Endothelial cell of umbilical vein (primary cell): ENCODE measurements at regions of chr6 and their contacts with region 1.

Region 1: GRCh38 chr6:152338335-152339125 is 298.6 kb downstream of the SYNE1 start:
- DNase-seq: peak; percentile 68
- H3K4me3 ChIP-seq: no peak overlapping the region
- H3K27ac ChIP-seq: no peak overlapping the region
- H3K4me1 ChIP-seq: no peaks in the 10 kb centered on the region
- H3K27me3 ChIP-seq: no peaks in the 10 kb centered on the region
- CTCF ChIP-seq: peak; percentile 87 to 89
- POLR2A ChIP-seq: no peak

Region 2: DNA sequence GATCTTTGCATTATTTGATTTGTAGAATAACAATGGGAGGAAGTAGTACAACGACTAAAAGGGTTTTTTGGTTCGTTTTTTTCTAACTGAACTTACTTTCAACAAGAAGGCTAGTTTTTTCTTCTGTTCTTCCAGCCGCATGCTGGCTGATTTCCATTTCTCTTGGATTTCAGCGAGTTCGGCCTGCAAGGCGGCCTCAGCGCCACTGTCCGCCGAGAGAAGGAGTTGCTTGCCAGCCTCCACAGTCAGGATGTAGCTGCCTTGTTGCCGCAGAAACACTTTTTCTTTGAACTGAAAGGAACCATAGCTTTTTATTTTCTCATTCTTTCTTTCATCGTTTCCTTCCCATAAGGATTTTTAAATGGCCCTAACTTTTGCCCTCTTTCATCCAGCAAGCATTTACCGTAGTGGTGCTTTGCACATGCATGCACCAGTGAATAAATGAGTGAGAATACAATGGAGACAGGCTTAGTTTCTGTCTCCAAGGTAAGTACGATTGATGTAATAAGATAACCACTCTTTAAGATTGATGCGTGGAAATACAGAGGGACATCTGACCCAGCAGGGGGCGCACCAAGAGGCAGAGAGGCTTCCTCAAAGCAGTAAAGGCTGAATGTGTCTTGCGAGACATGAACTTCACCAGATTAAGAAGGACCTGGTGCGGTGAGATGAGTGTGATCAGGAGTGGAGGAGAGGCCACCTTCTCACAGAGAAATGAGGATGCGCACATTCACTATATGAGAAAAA is 132.3 kb before region 1 on chr6:
- CTCF ChIA-PET with region 1: no interaction called
- POLR2A ChIA-PET with region 1: no interaction called
- dilution Hi-C with region 1: no loop called
- intact Hi-C with region 1: loop called (anchors 10 kb)
- DNase-seq: peak; percentile 37
- H3K4me3 ChIP-seq: no peak overlapping the region
- H3K27ac ChIP-seq: no peak overlapping the region
- H3K4me1 ChIP-seq: no peaks in the 10 kb centered on the region
- H3K27me3 ChIP-seq: no peaks in the 10 kb centered on the region
- CTCF ChIP-seq: peak; percentile 17 to 48
- POLR2A ChIP-seq: no peak

Region 3: GRCh38 chr6:152295346-152295745 is 43.2 kb before region 1 on chr6:
- CTCF ChIA-PET with region 1: interaction called, 152 read pairs
- POLR2A ChIA-PET with region 1: interaction called, 5 read pairs
- dilution Hi-C with region 1: no loop called
- intact Hi-C with region 1: no loop called
- DNase-seq: no peak
- H3K4me3 ChIP-seq: no peak overlapping the region
- H3K27ac ChIP-seq: no peak overlapping the region
- H3K4me1 ChIP-seq: no peaks in the 10 kb centered on the region
- H3K27me3 ChIP-seq: no peaks in the 10 kb centered on the region
- CTCF ChIP-seq: no peak
- POLR2A ChIP-seq: no peak

Region 4: GRCh38 chr6:152323376-152323775 is 15.2 kb before region 1 on chr6:
- CTCF ChIA-PET with region 1: interaction called, 34 read pairs
- POLR2A ChIA-PET with region 1: no interaction called
- dilution Hi-C with region 1: no loop called
- intact Hi-C with region 1: no loop called
- DNase-seq: no peak
- H3K4me3 ChIP-seq: no peak overlapping the region
- H3K27ac ChIP-seq: no peak overlapping the region
- H3K4me1 ChIP-seq: no peaks in the 10 kb centered on the region
- H3K27me3 ChIP-seq: no peaks in the 10 kb centered on the region
- CTCF ChIP-seq: no peak
- POLR2A ChIP-seq: no peak

Region 5: DNA sequence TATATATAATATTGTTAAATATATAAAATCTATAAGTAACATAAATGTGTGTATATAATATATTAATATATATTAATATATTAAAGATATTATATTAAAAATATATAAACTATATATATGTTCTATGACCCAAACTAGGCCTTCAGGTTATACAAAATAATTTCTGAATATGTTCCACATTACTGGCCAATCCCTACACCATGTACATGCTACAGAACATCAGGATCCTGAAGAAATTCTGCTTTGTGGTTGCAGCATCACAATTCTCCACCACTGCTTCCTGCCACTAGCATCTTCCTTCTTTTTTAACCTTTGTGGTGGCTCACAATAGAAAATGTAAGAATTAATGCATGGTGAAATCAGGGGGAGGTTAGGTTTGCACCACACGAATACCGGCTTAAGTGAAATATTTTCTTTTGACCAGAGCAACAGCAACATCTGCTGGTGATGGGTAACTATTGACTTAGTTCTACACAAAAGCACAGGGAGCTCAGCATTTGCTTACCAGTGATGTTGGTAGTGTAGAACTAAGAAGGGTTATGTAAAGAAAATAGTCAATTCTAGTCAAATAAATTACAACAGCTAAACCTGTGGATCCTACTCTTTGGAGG is 18.0 kb after region 1 on chr6:
- CTCF ChIA-PET with region 1: interaction called, 22 read pairs
- POLR2A ChIA-PET with region 1: no interaction called
- dilution Hi-C with region 1: no loop called
- intact Hi-C with region 1: no loop called
- DNase-seq: peak; percentile 54
- H3K4me3 ChIP-seq: no peak overlapping the region
- H3K27ac ChIP-seq: no peak overlapping the region
- H3K4me1 ChIP-seq: no peaks in the 10 kb centered on the region
- H3K27me3 ChIP-seq: no peaks in the 10 kb centered on the region
- CTCF ChIP-seq: peak in 1 of 2 donors; percentile 29
- POLR2A ChIP-seq: no peak

Region 6: DNA sequence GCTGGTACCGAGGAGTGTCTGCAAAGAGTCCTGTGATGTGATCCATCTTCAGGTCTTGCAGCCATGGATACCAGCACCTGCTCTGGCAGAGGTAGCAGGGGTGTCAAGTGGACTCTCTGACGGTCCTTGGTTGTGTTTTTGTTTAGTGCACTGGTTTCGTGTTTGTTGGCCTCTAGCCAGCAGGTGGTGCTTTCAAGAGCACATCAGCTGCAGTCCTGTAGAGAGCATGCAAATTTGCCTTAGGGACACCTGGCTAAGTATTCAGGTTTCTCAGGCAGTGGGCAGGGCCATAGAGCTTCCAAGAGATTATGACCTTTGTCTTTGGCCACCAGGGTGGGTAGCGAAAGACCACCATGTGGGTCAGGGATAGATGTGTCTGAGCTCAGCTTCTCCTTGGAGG is 807.1 kb after region 1 on chr6:
- CTCF ChIA-PET with region 1: no interaction called
- POLR2A ChIA-PET with region 1: no interaction called
- dilution Hi-C with region 1: no loop called
- intact Hi-C with region 1: no loop called
- DNase-seq: no peak
- H3K4me3 ChIP-seq: no peak overlapping the region
- H3K27ac ChIP-seq: no peak overlapping the region
- H3K4me1 ChIP-seq: no peaks in the 10 kb centered on the region
- H3K27me3 ChIP-seq: no peaks in the 10 kb centered on the region
- CTCF ChIP-seq: no peak
- POLR2A ChIP-seq: no peak